ENCODE measurements at regions of chr11 and their contacts with region 1.

Region 1: GRCh38 chr11:105618343-105618955 is 8.6 kb downstream of the GRIA4 start:
- DNase-seq: no peak
- H3K4me3 Mint-ChIP-seq: no peak overlapping the region
- H3K27ac Mint-ChIP-seq: no peak overlapping the region
- H3K4me1 Mint-ChIP-seq: no peaks in the 10 kb centered on the region
- H3K27me3 Mint-ChIP-seq: no peaks in the 10 kb centered on the region
- CTCF ChIP-seq: no peak

Region 2: GRCh38 chr11:104678408-104678807 is 940.0 kb before region 1 on chr11:
- CTCF ChIA-PET with region 1: no interaction called
- intact Hi-C with region 1: loop called (anchors 5 kb)
- DNase-seq: no peak
- H3K4me3 Mint-ChIP-seq: no peak overlapping the region
- H3K27ac Mint-ChIP-seq: no peak overlapping the region
- H3K4me1 Mint-ChIP-seq: peaks cover 9% of the 10 kb centered on the region
- H3K27me3 Mint-ChIP-seq: no peaks in the 10 kb centered on the region
- CTCF ChIP-seq: no peak

Measured in Calu3 (cell line).